Natural killer cell (primary cell): ENCODE measurements at regions of chr20 and their contacts with region 1.

Region 1: GRCh38 chr20:61120595-61121515 is 131.2 kb upstream of the CDH4 start:
- DNase-seq: peak in 1 of 2 donors; percentile 57
- ATAC-seq: peak; percentile 36 to 76 (median 50)
- H3K4me3 ChIP-seq: no peak overlapping the region
- H3K4me3 Mint-ChIP-seq: no peak overlapping the region
- H3K27ac ChIP-seq: no peak overlapping the region
- H3K27ac Mint-ChIP-seq: no peak overlapping the region
- H3K4me1 ChIP-seq: no peaks in the 10 kb centered on the region
- H3K4me1 Mint-ChIP-seq: peaks cover 7% of the 10 kb centered on the region in 2 donors
- H3K27me3 ChIP-seq: no peaks in the 10 kb centered on the region
- H3K27me3 Mint-ChIP-seq: peaks cover 0 to 14% of the 10 kb centered on the region in 2 donors
- CTCF ChIP-seq: peak; percentile 26

Region 2: GRCh38 chr20:60137629-60138245 is 983.1 kb before region 1 on chr20:
- intact Hi-C with region 1: loop called (anchors 5 kb)
- DNase-seq: peak in 1 of 2 donors; percentile 52
- ATAC-seq: peak; percentile 51 to 85 (median 80)
- H3K4me3 ChIP-seq: peak overlapping the region; percentile 14
- H3K4me3 Mint-ChIP-seq: peak overlapping the region; percentile 96
- H3K27ac ChIP-seq: no peak overlapping the region
- H3K27ac Mint-ChIP-seq: peak overlapping the region in 1 of 2 donors; percentile 49
- H3K4me1 ChIP-seq: peaks cover 17% of the 10 kb centered on the region
- H3K4me1 Mint-ChIP-seq: peaks cover 51 to 56% of the 10 kb centered on the region in 2 donors
- H3K27me3 ChIP-seq: no peaks in the 10 kb centered on the region
- H3K27me3 Mint-ChIP-seq: no peaks in the 10 kb centered on the region
- CTCF ChIP-seq: peak; percentile 71